A673 (cell line): ENCODE measurements at regions of chrX and their contacts with region 1.

Region 1: DNA sequence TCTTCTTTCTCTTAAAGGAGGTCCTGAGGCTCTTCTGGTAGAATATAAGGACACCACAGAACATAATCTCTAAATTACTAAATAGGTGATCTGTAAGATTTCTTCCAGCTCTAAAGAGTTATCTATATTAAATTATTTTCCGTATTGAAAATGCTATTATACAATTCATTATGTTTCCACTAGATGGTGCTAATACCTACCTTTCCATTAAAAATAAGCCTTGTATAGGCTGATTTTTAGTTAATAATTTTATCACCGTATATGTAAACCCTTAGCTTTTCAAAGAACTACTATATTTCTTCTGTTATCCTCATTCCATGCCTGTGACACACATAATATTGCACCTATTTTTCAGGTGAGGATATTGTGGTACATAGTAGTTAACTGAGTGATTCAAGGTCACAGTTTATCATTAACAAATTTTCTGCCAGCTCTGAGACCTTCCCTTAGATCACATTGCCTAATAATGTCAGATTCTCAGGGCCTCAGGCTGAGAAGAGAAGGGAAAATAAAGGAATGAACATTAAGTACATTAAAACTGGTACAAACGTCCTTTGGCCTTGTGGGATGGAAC is 138.8 kb downstream of the TEX11 start:
- DNase-seq: peak; percentile 12
- H3K4me3 ChIP-seq: no peak overlapping the region
- H3K27ac ChIP-seq: no peak overlapping the region
- H3K4me1 ChIP-seq: no peaks in the 10 kb centered on the region
- H3K27me3 ChIP-seq: no peaks in the 10 kb centered on the region
- CTCF ChIP-seq: peak; percentile 57

Region 2: GRCh38 chrX:69027181-69028005 is 1742.4 kb before region 1 on chrX:
- CTCF ChIA-PET with region 1: no interaction called
- POLR2A ChIA-PET with region 1: no interaction called
- intact Hi-C with region 1: no loop called
- DNase-seq: no peak
- H3K4me3 ChIP-seq: no peak overlapping the region
- H3K27ac ChIP-seq: no peak overlapping the region
- H3K4me1 ChIP-seq: no peaks in the 10 kb centered on the region
- H3K27me3 ChIP-seq: no peaks in the 10 kb centered on the region
- CTCF ChIP-seq: no peak

Region 3: GRCh38 chrX:70960728-70961127 is 191.0 kb after region 1 on chrX:
- CTCF ChIA-PET with region 1: interaction called, 3 read pairs
- POLR2A ChIA-PET with region 1: no interaction called
- intact Hi-C with region 1: loop called (anchors 5 kb)
- DNase-seq: peak; percentile 35
- H3K4me3 ChIP-seq: no peak overlapping the region
- H3K27ac ChIP-seq: no peak overlapping the region
- H3K4me1 ChIP-seq: no peaks in the 10 kb centered on the region
- H3K27me3 ChIP-seq: no peaks in the 10 kb centered on the region
- CTCF ChIP-seq: peak; percentile 49